Right ventricle myocardium inferior (tissue), 1 donor: ENCODE measurements at regions of chr17 and their contacts with region 1.

Region 1: GRCh38 chr17:73359987-73360410 is 48.2 kb upstream of the CDC42EP4 start:
- DNase-seq: peak; percentile 80
- ATAC-seq: peak; percentile 74

Region 2: DNA sequence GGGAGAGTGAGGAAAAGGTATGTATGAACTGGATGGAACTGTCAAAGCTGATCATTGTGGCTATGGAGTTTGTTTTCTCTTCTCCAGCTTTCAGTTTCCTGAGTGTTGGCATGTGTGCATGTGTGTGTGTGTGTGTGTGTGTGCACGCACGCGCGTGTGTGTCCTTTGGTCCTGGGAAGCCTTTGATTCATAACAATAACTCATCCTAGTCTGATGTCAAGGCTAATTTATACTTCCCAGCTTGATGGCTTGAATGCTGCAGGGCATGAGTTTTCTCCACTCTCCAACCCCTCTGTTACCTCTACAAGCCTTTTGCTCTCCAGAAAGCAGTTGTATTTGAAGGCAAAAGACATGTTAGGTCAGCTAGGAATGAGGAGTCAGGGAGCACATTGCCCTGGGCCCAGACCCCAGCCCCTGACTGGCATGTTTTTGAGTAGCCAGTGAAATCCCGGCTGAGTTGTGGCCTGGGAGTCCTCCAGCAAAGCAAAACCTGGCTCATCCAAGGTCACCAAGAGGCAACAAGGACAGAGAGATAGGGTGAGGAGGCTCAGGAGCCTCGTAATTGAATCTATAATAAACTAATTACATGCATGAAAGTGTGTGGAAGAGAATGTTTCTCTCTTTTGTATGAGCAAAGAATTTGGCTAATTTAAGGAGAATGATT is 39.3 kb before region 1 on chr17:
- intact Hi-C with region 1: loop called (anchors 2 kb)
- DNase-seq: no peak
- ATAC-seq: no peak